WTC11 (cell line): ENCODE measurements at regions of chr10 and their contacts with region 1.

Region 1: GRCh38 chr10:101467286-101467770 is 113.4 kb downstream of the BTRC start:
- DNase-seq: no peak
- ATAC-seq: peak; percentile 81
- H3K4me3 Mint-ChIP-seq: no peak overlapping the region
- H3K27ac Mint-ChIP-seq: no peak overlapping the region
- H3K4me1 Mint-ChIP-seq: peaks cover 28% of the 10 kb centered on the region
- H3K27me3 Mint-ChIP-seq: no peaks in the 10 kb centered on the region
- CTCF ChIP-seq: peak; percentile 61

Region 2: DNA sequence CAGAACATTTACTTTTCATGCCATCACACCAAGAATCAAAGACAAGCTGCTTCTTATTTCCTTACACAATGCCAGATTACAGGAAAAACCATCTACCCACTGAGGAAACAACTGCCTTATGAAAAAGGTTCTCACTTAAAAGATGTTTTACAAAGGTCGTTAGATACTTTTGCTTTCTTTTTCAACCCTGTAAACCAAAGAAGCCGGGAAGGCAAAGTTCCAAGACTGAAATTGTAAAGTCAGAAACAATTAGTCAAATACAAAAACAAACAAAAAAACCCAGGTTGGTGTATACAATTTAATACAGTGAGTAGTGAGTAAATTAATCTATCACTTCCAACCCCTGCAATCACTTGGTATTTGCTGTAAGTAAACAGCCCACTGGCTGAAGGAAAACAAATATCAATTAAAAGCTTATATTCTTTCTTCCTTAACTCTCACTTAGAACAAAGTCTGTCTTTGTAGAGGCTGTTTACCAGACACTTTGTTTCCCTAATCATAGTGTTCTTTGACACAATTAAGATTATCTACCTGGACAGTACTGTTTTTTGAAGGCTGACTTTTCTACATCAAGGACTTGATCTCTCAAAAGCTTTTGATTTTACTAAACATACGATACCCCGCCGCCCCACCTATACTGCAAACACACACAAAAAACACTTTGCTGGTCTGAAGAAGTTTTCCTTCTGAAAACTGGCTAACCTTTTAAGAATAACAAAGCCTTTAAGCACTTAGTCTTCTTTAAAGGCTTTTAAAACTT is 1299.6 kb before region 1 on chr10:
- CTCF ChIA-PET with region 1: no interaction called
- POLR2A ChIA-PET with region 1: no interaction called
- DNase-seq: no peak
- ATAC-seq: no peak
- H3K4me3 Mint-ChIP-seq: no peak overlapping the region
- H3K27ac Mint-ChIP-seq: no peak overlapping the region
- H3K4me1 Mint-ChIP-seq: no peaks in the 10 kb centered on the region
- H3K27me3 Mint-ChIP-seq: no peaks in the 10 kb centered on the region
- CTCF ChIP-seq: no peak

Region 3: GRCh38 chr10:100939763-100940344 is 527.5 kb before region 1 on chr10:
- CTCF ChIA-PET with region 1: no interaction called
- POLR2A ChIA-PET with region 1: no interaction called
- DNase-seq: no peak
- ATAC-seq: no peak
- H3K4me3 Mint-ChIP-seq: no peak overlapping the region
- H3K27ac Mint-ChIP-seq: no peak overlapping the region
- H3K4me1 Mint-ChIP-seq: no peaks in the 10 kb centered on the region
- H3K27me3 Mint-ChIP-seq: no peaks in the 10 kb centered on the region
- CTCF ChIP-seq: no peak

Region 4: GRCh38 chr10:101214446-101215396 is 252.6 kb before region 1 on chr10:
- CTCF ChIA-PET with region 1: interaction called, 28 read pairs
- POLR2A ChIA-PET with region 1: no interaction called
- DNase-seq: peak; percentile 93
- ATAC-seq: peak; percentile 65
- H3K4me3 Mint-ChIP-seq: peak overlapping the region; percentile 76
- H3K27ac Mint-ChIP-seq: no peak overlapping the region
- H3K4me1 Mint-ChIP-seq: peaks cover 30% of the 10 kb centered on the region
- H3K27me3 Mint-ChIP-seq: peaks cover 96% of the 10 kb centered on the region
- CTCF ChIP-seq: peak; percentile 83

Region 5: DNA sequence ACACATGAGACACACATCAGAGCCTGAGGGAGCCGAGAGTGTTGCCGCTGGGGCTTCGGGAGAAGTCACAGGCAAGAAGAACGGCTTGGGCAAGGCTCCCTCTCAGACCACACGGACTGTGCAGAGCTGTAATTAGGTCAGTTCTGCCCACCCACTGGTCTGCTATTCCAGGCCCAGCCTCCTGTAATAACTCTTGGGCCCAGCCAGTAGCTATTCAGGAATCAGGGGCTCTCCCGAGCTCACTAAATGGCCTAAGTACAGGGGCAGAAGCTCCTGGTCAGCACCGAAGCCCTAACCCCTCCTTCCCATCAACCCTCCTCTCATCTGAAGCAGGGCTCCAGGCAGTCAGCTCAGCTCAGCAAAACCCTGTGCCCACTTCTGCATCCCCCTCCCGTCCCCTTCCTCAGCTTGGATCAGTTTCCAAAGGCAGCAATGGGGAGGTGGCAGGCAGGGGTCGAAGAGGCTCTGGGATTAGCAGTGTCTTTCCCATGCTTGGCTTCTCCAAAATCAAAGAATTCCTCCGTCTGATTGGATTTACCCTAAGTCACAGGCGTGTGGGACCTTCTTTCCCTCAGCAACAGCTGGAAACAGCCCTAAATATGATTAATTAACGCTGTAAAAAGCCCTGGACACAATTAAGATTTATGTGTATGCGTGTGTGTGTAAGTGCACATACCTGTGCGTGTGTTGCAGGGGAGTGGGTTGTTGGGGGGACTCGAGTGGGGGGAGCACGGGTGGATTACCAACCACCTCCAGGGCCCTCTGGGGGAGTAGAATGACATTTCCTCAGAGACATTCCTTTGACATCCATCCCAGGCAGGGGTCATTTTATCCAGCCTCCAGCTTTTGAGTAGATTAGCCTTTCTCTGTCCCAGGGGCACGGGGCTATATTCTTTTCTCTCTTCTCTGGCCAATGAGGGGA is 161.7 kb before region 1 on chr10:
- CTCF ChIA-PET with region 1: interaction called, 64 read pairs
- POLR2A ChIA-PET with region 1: no interaction called
- DNase-seq: no peak
- ATAC-seq: no peak
- H3K4me3 Mint-ChIP-seq: no peak overlapping the region
- H3K27ac Mint-ChIP-seq: no peak overlapping the region
- H3K4me1 Mint-ChIP-seq: peaks cover 13% of the 10 kb centered on the region
- H3K27me3 Mint-ChIP-seq: peaks cover 16% of the 10 kb centered on the region
- CTCF ChIP-seq: no peak

Region 6: DNA sequence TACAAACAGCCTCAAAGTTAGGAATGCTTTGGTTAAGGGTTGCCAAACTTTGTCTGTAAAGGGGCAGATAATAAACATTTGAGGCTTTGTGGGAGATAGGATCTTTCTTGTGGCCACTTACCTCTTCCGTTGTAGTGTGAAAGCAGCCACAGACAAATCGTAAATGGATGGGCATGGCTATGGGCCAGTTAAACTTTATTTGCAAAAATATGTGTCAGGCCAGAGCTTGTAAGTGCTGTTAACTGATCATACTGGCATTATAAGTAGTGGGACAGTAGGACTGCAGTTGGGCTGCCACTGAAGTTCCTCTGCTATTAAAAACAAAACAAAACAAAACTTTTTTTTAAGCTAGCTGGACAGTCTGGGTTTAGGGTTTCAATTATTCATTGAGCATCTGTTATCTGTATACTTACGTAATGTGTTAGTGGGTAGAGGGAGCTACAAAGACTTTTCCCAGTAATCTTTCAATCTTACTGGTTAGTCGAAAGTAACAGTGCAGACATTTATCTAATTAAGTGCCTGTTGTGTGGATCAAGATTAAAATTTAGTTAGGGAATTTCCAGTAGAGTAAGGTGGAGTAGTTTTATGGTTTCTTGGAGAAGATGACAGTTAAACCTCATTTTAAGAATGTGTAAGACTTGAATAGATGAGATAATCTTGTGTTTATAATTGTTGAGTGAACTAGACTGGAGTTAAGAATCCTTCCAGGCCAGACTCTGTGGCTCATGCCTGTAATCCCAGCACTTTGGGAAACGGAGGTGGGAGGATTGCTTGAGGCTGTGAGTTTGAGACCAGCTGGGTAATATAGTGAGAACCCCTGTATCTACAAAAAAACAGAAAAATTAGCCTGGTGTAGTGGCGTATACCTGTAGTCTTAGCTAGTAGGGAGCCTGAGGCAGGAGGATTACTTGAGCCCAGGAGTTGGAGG is 13.3 kb before region 1 on chr10:
- CTCF ChIA-PET with region 1: interaction called, 58 read pairs
- POLR2A ChIA-PET with region 1: no interaction called
- DNase-seq: no peak
- ATAC-seq: no peak
- H3K4me3 Mint-ChIP-seq: no peak overlapping the region
- H3K27ac Mint-ChIP-seq: no peak overlapping the region
- H3K4me1 Mint-ChIP-seq: no peaks in the 10 kb centered on the region
- H3K27me3 Mint-ChIP-seq: no peaks in the 10 kb centered on the region
- CTCF ChIP-seq: no peak

Region 7: DNA sequence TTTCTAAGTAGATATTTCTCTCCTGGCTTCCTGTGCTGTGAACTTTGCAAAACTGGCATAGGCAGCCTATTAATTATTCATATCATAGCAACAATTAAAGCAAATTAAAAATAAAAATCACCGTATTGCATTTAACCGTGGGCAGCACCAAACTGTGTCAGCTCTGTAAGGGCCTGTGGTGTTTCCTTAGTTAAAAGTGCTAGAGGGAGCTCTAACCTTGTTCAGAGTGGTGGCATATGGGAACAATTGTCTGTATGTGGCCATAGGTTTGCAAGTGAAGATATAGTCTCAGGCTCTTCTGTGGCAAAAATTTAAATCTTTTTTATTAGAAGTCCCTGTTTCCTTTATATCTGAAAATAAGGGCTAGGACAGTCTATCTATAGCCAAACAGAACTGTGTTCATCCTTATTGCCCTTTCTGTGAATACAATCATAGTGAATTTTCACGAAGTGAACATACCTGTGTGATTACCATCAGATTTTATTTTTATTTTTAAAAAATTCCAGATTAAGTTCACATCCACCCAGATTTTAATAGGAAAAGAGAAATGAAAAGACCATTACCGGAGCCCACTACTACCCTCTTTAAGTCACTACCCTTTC is 28.1 kb after region 1 on chr10:
- CTCF ChIA-PET with region 1: interaction called, 25 read pairs
- POLR2A ChIA-PET with region 1: no interaction called
- DNase-seq: no peak
- ATAC-seq: peak; percentile 95
- H3K4me3 Mint-ChIP-seq: no peak overlapping the region
- H3K27ac Mint-ChIP-seq: no peak overlapping the region
- H3K4me1 Mint-ChIP-seq: peaks cover 26% of the 10 kb centered on the region
- H3K27me3 Mint-ChIP-seq: no peaks in the 10 kb centered on the region
- CTCF ChIP-seq: no peak

Region 8: GRCh38 chr10:101789686-101790085 is 322.4 kb after region 1 on chr10:
- CTCF ChIA-PET with region 1: no interaction called
- POLR2A ChIA-PET with region 1: no interaction called
- DNase-seq: no peak
- ATAC-seq: no peak
- H3K4me3 Mint-ChIP-seq: no peak overlapping the region
- H3K27ac Mint-ChIP-seq: peak overlapping the region; percentile 19; the same call in 1 of the 2 replicates
- H3K4me1 Mint-ChIP-seq: peaks cover 3% of the 10 kb centered on the region
- H3K27me3 Mint-ChIP-seq: no peaks in the 10 kb centered on the region
- CTCF ChIP-seq: no peak